AG04449 (cell line): ENCODE measurements at regions of chr12 and their contacts with region 1.

Region 1: DNA sequence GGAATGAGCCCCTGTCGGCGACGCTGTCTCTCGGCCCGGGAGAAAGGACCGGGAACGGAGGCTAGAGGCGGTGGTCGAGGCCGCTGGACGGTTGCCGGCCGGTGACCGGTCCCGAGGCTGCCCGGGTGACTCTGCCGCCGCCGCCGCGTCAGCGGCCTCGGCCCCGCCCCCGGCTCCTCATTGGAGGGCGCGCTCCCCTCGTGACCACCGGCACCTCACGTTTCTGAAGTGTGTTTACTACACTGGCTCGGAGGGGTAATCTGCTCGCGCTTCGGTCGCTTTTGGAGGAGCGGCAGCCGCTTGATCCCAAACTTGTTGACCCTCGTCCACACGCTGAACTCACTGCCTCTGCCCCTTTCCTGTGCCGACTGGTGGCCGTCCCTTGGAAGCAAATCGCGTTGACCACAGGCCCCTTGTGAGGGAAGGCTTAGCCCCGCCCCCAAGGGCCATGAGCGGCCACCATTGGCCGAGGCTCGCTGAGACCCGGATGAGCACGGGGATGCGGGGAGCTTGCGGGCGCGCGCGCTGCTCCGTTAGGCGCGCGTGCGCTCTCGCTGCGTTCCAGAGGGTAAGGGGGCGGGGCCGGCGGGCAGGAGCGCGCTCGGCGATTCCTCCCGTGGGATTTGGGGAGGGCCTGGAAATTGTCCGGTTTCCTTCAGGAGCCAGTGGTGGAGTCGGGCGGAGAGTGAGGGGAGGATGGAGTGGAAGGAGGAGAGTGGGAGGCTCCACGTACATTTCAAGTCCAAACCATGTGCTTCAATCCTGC is at the start of gene CRY1:
- DNase-seq: peak; percentile 59
- H3K4me3 ChIP-seq: peak within 1 kb of the TSS; percentile 97
- CTCF ChIP-seq: no peak

Region 2: GRCh38 chr12:106955377-106956047 is 138.1 kb before region 1 on chr12 and contains the start of gene TMEM263:
- CTCF ChIA-PET with region 1: interaction called, 3 read pairs
- POLR2A ChIA-PET with region 1: interaction called, 25 read pairs
- DNase-seq: peak; percentile 62
- H3K4me3 ChIP-seq: peak within 1 kb of the TSS; percentile 96
- CTCF ChIP-seq: no peak

Region 3: DNA sequence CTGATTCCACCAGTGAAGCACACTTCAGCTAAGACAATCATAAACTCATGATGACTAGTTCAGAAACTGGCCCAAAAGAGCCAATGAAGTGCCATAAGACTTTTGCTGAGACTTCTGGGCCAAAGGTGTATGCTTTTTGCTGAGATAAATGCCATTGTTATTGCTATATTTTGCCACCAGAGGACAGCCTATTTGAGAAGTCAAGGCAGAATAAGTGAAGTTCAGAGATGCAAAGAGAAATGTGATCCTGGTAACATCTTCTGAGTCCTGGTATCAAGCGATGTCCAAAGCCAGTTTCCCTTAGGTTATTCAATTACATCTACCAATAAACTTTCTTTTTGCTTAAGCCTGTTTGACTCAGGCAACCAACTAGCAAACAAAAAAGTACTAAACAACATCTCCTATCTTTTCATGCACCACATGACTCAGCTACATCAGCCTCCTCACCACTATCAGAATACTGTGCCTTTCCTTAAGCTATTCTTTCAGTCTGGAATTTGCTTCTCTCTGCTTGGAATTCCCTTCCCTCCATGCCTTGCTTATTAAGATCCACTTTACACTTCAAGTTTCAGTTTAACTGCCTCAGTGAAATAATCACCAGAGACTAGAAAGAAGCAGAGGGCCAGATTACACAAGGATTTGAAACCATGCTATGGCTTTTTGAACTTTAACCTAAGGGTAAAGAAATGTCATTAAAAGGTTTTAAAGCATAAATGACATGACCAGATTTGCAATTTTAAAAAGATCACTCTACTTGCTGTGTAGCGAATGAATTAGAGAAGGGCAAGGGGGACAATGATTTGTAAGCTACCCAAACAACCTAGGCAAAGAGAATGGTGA is 14.2 kb before region 1 on chr12:
- CTCF ChIA-PET with region 1: interaction called, 50 read pairs
- POLR2A ChIA-PET with region 1: no interaction called
- DNase-seq: no peak
- H3K4me3 ChIP-seq: no peak overlapping the region
- CTCF ChIP-seq: peak; percentile 42

Region 4: GRCh38 chr12:107105410-107105703 is 11.8 kb after region 1 on chr12:
- CTCF ChIA-PET with region 1: interaction called, 88 read pairs
- POLR2A ChIA-PET with region 1: no interaction called
- DNase-seq: no peak
- H3K4me3 ChIP-seq: no peak overlapping the region
- CTCF ChIP-seq: no peak